ENCODE measurements at regions of chr15 and their contacts with region 1.

Region 1: GRCh38 chr15:74438721-74439316 is 5.1 kb upstream of the SEMA7A start:
- DNase-seq: no peak
- H3K4me3 ChIP-seq: no peak overlapping the region
- CTCF ChIP-seq: peak; percentile 90

Region 2: DNA sequence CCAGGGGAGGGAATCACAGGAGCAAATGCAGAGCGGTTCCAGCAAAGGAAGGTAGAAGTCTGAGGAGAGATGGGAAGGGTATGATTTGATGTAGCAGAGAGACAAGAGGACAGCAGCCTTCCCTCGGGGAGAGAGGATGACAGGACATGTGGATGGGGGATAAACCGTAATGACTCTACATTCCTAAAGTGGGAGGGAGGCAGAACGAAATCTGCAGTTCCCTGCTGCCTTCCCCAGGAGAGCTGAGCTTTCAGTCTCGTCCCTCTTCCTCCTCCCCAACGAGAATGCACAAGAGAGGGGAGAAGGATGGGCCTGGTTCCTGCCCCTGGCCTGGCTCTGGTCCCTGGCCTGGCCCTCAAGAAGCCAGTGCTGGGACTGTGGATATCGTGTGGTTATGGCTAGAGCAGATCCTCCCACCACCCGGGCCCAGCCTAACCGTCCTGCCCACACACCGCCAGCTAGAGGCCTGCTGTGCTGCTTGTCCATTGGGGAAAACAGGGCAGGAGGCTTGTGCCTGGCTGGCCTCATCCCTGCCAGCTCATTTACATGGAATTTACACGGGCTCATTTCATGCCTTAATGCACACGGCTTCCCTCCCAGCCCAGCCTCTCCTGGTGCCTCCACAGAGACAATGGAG is 31.6 kb before region 1 on chr15:
- CTCF ChIA-PET with region 1: interaction called, 47 read pairs
- POLR2A ChIA-PET with region 1: interaction called, 3 read pairs
- DNase-seq: peak; percentile 73
- H3K4me3 ChIP-seq: peak overlapping the region; percentile 33
- CTCF ChIP-seq: peak; percentile 18

Region 3: DNA sequence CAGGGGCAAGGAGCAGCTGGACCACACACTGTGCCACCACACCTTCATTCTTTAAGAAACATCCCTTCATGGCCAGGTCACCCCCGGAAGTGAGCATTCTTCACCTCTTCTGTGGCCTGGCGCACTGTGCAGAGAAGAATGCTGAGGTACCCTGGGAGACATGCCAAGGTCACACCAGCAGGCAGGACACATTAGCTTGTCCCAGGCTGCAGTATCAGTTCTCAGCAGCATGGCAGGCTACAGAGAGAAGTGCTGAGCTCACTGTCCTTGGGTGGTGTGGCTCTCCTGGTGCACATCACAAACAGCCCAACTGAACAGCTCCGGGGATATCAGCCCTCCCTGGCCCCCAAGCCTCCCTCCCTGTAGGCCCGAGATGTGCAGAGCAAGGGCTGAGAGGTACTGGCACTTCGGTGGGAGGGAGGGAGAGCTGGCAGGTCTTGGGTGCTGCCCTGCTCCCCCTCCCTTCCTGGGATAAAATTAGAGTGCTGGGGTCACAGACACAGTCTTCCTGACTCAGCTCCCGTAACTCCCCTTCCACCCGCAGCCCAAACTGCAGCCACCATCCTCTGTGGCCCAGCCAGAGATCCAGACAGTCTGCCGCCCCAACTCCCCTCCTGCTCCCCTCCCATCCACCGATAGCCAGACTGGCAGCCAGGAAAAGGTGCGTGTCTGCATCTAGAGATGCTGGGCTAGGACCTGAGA is 18.5 kb before region 1 on chr15:
- CTCF ChIA-PET with region 1: interaction called, 11 read pairs
- POLR2A ChIA-PET with region 1: interaction called, 4 read pairs
- DNase-seq: no peak
- H3K4me3 ChIP-seq: no peak overlapping the region
- CTCF ChIP-seq: no peak

Region 4: DNA sequence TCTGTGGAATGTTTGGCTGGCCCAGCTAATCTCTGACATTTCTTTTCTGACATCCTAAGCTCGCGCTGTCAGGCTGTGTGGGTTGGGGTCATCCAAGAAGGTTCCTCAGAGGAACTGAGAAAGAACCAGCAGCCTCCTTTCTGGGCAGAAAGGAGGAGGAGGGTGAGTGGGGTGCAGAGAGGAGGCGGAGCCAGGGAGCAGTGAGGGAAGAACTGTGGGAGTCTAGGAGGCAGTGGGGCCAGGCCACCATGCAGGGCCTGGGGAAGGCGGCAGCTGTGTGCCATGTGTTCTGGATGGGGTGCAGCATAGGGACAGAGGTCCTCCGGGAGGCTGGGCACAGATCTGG is 10.4 kb before region 1 on chr15:
- CTCF ChIA-PET with region 1: interaction called, 42 read pairs
- POLR2A ChIA-PET with region 1: no interaction called
- DNase-seq: no peak
- H3K4me3 ChIP-seq: no peak overlapping the region
- CTCF ChIP-seq: no peak

Region 5: DNA sequence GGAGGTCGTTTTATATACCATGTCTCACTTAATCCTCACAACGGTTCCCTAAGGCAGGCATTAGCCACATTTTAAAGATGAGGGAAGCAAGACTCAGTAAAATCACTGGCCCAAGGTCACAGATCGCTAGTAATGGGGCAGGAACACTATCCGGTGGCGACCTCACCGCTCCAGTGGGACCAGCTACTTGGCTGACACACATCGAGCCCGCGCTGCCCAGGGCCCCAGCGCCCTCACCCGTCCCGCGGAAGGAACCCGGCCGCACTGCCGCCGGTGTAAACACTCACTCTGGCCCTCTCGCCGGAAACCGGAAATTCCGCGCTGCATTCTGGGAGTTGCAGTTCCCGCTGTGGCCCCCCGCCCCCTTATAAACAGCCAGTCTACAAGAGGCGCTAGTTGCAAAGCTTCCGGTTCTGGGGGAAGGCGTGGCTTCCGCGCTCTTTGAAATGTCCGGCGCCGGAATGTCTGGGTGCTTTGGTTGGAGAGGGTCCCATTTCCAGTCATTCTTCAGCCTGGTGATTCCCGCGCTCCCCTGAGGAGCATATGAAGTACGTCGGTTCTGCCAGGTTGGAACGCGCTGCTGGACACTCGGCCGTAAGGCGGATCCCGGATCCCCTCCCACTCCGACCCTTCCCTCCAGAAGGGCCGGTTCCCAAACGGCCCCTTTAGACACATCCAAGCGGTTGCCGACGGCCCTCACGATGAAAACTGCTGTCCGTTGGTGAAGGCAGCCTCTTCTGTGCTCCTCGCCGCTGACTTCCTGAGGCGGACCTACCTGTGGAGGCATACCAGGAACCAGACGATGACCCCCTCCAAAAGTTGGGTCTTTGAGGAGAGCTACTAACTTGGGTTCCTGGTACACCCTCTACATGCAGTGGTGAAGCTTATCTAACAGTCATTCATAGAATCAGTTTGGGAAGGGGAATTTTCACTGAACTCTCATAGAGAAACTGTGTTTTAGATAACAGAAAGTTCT is 22.3 kb after region 1 on chr15 and contains the start of gene UBL7:
- CTCF ChIA-PET with region 1: interaction called, 162 read pairs
- POLR2A ChIA-PET with region 1: interaction called, 3 read pairs
- DNase-seq: peak; percentile 67
- H3K4me3 ChIP-seq: peak within 1 kb of the TSS; percentile 92
- CTCF ChIP-seq: peak; percentile 38